ENCODE measurements at regions of chr3 and their contacts with region 1.

Region 1: GRCh38 chr3:111577794-111578685 is 17.1 kb downstream of the ZBED2 start:
- DNase-seq: peak; percentile 39
- ATAC-seq: peak; percentile 94
- H3K4me3 ChIP-seq: no peak overlapping the region
- H3K27ac ChIP-seq: no peak overlapping the region
- H3K4me1 ChIP-seq: no peaks in the 10 kb centered on the region
- H3K27me3 ChIP-seq: no peaks in the 10 kb centered on the region; a peak in 1 of 4 replicates
- CTCF ChIP-seq: peak; percentile 33 to 58 (median 34); a peak in 5 of 6 replicates
- EP300 ChIP-seq: no peak
- POLR2A ChIP-seq: no peak
- RAD21 ChIP-seq: peak; percentile 58

Region 2: GRCh38 chr3:111473316-111473949 is 104.6 kb before region 1 on chr3:
- CTCF ChIA-PET with region 1: no interaction called
- POLR2A ChIA-PET with region 1: no interaction called
- RAD21 ChIA-PET with region 1: no interaction called
- SMC1A ChIA-PET with region 1: no interaction called
- in situ Hi-C with region 1: no loop called
- intact Hi-C with region 1: no loop called
- DNase-seq: no peak
- ATAC-seq: no peak
- H3K4me3 ChIP-seq: no peak overlapping the region
- H3K27ac ChIP-seq: no peak overlapping the region
- H3K4me1 ChIP-seq: no peaks in the 10 kb centered on the region
- H3K27me3 ChIP-seq: no peaks in the 10 kb centered on the region
- CTCF ChIP-seq: no peak
- EP300 ChIP-seq: no peak
- POLR2A ChIP-seq: no peak
- RAD21 ChIP-seq: no peak

Region 3: DNA sequence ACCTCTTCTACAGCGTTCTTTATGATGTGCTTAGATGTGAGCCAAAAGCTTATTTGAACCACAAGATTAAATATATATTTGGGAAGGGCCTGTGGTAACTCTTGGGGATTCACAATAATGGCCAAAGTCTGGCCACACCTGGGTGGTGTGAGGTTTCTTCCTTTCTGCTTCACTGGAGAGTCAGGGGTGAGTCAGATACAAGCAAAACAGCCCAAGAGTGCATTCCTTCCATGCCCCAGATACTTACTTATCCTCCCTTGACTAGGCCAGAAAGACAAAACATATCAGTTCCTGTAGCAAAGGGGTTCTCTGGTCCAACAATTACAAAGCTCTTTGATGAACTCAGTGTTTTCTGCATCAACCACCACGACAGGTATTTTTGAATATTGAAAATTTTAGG is 16.2 kb after region 1 on chr3:
- CTCF ChIA-PET with region 1: interaction called, 10 read pairs
- POLR2A ChIA-PET with region 1: no interaction called
- RAD21 ChIA-PET with region 1: interaction called, 12 read pairs
- SMC1A ChIA-PET with region 1: interaction called, 19 read pairs
- in situ Hi-C with region 1: no loop called
- intact Hi-C with region 1: no loop called
- DNase-seq: no peak
- ATAC-seq: peak; percentile 87
- H3K4me3 ChIP-seq: no peak overlapping the region
- H3K27ac ChIP-seq: no peak overlapping the region
- H3K4me1 ChIP-seq: no peaks in the 10 kb centered on the region
- H3K27me3 ChIP-seq: no peaks in the 10 kb centered on the region
- CTCF ChIP-seq: no peak
- EP300 ChIP-seq: no peak
- POLR2A ChIP-seq: no peak
- RAD21 ChIP-seq: no peak

Region 4: DNA sequence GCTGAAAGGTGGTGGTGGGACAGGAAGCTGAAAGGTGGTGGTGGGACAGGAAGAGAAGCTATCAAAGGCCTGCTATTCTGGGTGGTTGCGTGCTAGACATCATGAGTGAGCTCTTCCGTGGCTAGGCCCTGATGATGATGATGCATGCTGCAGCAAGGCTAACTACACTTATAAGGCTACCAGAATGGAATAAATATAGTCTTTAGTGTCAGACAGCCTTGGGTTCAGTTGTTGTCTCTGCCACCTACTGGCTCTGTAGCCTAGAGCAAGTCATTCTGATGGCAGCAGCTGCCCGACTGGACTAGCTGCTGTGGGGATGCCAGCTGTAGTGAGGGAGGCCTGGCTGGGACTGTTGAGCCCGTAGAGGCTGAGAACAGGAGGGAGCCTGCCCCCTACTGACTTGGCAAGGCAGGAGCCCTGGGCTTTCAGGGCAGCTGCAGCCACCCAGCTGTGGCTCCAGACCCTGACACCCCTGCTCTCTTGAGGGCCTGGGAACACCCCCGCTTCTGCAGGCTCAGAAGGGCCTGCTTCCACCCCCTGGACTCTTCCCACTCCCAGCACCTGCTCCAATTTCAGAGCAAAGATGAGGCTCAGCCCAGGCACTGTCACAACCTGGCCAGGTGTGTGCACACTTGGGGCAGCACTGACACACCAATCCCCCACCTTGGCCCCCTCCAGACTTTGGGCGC is 38.5 kb after region 1 on chr3:
- CTCF ChIA-PET with region 1: interaction called, 61 read pairs
- POLR2A ChIA-PET with region 1: no interaction called
- RAD21 ChIA-PET with region 1: interaction called, 30 read pairs
- SMC1A ChIA-PET with region 1: interaction called, 41 read pairs
- in situ Hi-C with region 1: no loop called
- intact Hi-C with region 1: loop called (anchors 1 kb)
- DNase-seq: no peak
- ATAC-seq: peak; percentile 83
- H3K4me3 ChIP-seq: no peak overlapping the region
- H3K27ac ChIP-seq: no peak overlapping the region
- H3K4me1 ChIP-seq: no peaks in the 10 kb centered on the region
- H3K27me3 ChIP-seq: no peaks in the 10 kb centered on the region
- CTCF ChIP-seq: peak; percentile 16 to 29 (median 20); a peak in 4 of 6 replicates
- EP300 ChIP-seq: no peak
- POLR2A ChIP-seq: no peak
- RAD21 ChIP-seq: peak; percentile 29

Region 5: GRCh38 chr3:111691293-111691909 is 113.4 kb after region 1 on chr3:
- CTCF ChIA-PET with region 1: interaction called, 56 read pairs
- POLR2A ChIA-PET with region 1: no interaction called
- RAD21 ChIA-PET with region 1: interaction called, 36 read pairs
- SMC1A ChIA-PET with region 1: interaction called, 30 read pairs
- in situ Hi-C with region 1: no loop called
- intact Hi-C with region 1: no loop called
- DNase-seq: no peak
- ATAC-seq: peak; percentile 63
- H3K4me3 ChIP-seq: no peak overlapping the region
- H3K27ac ChIP-seq: no peak overlapping the region
- H3K4me1 ChIP-seq: peaks cover 6% of the 10 kb centered on the region; the same call in 1 of the 2 replicates
- H3K27me3 ChIP-seq: no peaks in the 10 kb centered on the region
- CTCF ChIP-seq: peak; percentile 24 to 44 (median 31); a peak in 4 of 6 replicates
- EP300 ChIP-seq: no peak
- POLR2A ChIP-seq: no peak
- RAD21 ChIP-seq: peak; percentile 52

Region 6: DNA sequence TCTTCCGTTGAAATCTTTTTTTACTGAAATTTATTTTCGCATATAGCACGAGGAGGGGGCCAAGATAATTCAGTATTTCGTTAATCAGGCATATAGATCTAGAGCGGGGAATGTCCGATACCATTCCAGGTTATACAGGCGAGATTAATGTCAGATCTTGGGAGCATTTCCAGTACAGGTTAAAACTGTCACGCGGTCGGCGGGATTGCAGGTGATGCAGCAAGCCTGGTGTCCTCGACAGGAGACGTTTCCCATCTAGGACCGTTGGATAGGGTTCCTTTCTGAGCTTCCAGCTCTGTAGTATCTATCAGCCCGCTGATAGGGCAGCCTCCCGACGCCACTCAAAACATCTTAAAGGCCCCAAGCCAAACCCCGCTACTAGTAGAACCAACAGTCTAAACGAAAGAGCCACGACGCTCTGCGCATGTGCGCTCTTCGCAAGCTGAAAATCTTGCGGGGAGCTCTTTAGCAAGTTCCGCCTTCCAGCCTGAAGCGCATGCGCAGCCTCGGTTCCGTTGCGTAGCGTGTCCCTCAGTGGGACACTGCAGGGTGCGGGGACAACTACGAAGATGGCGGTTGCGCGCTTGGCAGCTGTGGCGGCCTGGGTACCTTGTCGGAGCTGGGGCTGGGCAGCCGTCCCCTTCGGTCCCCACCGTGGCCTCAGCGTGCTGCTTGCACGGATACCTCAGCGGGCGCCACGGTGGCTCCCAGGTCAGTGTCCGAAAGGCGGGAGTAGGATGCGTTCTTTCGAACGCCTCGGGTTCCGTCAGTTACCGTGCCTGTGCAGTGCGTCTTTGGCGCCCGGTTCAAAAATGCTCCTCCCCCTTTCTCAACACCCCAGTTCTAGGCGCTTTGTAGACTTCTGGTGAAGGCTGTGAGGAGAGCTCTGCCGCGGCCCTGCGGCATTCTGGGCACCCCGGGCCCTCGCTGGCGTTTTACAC is 400.7 kb after region 1 on chr3 and contains the start of gene ABHD10:
- CTCF ChIA-PET with region 1: no interaction called
- POLR2A ChIA-PET with region 1: no interaction called
- RAD21 ChIA-PET with region 1: no interaction called
- SMC1A ChIA-PET with region 1: no interaction called
- in situ Hi-C with region 1: loop called (anchors 10 kb)
- intact Hi-C with region 1: no loop called
- DNase-seq: peak; percentile 92
- ATAC-seq: peak; percentile 97
- H3K4me3 ChIP-seq: peak within 1 kb of the TSS; percentile 89
- H3K27ac ChIP-seq: peak within 1 kb of the TSS; percentile 78
- H3K4me1 ChIP-seq: peaks cover 5% of the 10 kb centered on the region
- H3K27me3 ChIP-seq: no peaks in the 10 kb centered on the region
- CTCF ChIP-seq: no peak
- EP300 ChIP-seq: no peak
- POLR2A ChIP-seq: peak; percentile 99
- RAD21 ChIP-seq: no peak
- polyA plus RNA-seq, gene ABHD10: 12.3 to 16.7 TPM

Measured in GM12878 (cell line).